GM13977 (cell line): ENCODE measurements at regions of chr9 and their contacts with region 1.

Region 1: GRCh38 chr9:122810306-122810946 is 10.5 kb downstream of the OR1K1 start:
- DNase-seq: peak; percentile 80
- CTCF ChIP-seq: peak; percentile 86

Region 2: DNA sequence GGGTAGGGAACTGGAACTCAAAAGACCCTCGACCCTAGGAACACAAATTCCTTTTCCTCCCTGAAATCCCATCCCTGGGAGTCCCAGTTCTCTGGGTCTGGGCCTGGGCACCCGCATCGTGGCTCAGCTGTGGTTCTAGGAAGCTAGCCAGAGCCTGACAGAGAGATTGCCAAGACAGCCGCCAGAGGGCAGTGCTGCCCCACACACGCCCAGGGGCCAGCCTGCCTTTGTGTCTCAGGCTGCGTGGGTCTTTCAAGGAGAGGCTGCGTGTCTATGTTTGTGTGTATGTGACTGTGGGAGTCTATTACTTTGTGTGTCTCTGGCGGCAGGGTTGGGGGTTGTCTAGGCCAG is 685.3 kb before region 1 on chr9:
- in situ Hi-C with region 1: loop called (anchors 25 kb)
- DNase-seq: peak; percentile 91
- CTCF ChIP-seq: peak; percentile 93

Region 3: DNA sequence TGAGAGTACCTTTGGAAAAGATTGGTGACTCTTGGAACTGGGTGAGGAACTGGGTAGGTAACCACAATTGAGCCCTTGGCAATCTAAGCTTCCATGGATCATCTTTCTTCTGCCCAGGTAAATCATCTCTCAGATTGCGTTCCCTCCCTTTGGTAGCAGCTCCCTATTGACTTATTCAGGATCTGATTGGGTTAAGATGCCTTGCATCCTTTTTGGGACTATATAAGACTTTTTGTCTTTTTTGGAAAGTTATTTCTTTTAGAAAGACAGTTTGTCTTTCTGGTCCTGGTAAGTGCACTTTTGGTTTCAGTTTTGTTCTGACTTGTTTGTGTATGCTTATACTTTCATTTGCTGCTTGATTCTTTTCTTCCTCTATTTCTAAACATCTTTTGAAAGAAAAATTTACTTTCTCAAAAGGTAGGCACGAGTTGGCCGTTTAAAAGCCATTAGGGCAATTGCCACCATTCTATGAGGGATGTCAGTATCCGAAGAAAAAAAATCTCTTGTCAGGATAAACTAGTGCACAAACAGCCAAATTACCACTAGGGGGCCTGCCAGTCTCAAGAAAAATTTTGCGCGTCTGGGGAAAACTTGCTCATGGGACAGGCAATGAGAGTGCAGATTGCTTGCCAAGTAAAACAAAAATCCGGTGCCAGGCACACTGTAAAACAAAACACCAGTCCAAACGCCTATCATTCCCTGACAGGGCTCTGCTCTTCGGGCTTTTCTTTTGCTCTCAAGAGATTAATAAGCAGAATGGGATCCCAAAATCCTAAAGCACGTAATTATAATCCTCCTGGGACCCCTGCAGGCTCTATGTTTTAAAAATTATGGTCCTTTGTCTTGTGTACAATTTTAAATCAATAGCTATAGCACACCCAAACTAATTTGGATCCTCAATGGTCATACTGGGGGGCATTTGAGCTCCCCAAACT is 345.5 kb before region 1 on chr9:
- in situ Hi-C with region 1: loop called (anchors 10 kb)
- DNase-seq: peak; percentile 62
- CTCF ChIP-seq: peak; percentile 76

Region 4: DNA sequence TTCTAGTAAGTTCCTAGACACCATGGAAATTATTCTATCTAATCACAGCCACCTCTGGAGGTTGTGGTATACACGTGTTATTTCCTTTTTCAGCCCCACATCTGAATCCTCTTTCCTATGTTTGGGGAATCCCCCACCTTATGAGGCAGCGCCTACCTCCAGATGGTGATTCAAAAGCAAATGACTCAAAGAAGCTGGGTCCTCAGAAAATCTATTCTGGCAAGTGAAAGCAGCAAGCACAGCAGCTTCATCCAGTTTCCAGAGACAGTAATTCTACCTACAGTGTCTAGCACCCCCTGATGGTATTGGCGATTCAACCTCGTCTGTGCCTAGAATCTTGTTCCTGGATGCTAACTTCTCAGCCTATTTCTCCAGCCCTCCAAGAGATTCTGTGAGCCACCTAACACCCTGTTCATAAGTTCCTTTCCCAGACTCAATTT is 415.0 kb after region 1 on chr9:
- in situ Hi-C with region 1: no loop called
- DNase-seq: peak; percentile 72
- CTCF ChIP-seq: peak; percentile 77